PC-9 (cell line): ENCODE measurements at regions of chr17 and their contacts with region 1.

Region 1: DNA sequence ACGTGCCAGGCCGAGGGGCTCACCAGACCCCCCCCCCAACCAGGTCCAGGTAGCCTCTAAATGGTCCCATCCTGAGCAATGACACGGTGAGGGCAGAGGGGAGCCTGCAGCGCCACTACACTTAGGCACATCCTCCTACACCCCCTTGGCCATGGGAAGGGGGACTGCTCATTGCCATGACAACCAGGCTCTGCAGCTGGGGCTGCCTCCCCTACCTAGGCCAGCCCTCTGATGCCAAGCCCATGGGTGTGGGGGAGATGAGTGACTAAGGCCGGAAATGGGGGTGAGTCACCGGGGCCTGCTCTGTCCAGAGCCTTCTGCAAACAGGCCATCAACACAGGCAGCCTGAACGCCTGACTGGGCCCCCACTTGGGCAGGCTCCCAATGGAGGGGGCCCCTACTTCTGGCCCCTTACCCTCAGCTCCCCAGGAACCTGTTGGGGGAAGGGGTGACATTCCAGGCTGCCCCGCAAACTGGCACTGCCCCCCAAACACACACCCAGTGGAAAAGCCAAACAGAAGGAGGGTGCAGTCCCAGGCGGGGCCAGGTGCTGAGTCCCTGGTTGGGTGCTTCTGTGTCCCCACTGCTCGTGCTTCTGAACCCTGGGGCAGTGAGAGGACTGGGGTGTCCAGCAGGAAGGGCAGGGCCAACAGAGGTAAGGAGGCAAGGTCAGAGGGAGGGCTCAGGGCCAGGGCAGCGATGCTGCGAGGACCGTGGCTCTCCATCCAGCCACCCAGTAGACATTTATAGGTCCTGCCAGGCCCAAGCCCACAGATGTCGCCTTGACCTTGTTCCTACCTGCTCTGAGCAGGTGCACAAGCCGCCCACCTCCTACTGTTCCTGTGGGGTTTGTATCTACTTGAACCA is 8.2 kb downstream of the PLCD3 start:
- DNase-seq: peak; percentile 77 to 85
- H3K4me3 ChIP-seq: no peak overlapping the region
- H3K27ac ChIP-seq: peak overlapping the region; percentile 65
- H3K4me1 ChIP-seq: peaks cover 63% of the 10 kb centered on the region
- H3K27me3 ChIP-seq: no peaks in the 10 kb centered on the region
- CTCF ChIP-seq: no peak

Region 2: DNA sequence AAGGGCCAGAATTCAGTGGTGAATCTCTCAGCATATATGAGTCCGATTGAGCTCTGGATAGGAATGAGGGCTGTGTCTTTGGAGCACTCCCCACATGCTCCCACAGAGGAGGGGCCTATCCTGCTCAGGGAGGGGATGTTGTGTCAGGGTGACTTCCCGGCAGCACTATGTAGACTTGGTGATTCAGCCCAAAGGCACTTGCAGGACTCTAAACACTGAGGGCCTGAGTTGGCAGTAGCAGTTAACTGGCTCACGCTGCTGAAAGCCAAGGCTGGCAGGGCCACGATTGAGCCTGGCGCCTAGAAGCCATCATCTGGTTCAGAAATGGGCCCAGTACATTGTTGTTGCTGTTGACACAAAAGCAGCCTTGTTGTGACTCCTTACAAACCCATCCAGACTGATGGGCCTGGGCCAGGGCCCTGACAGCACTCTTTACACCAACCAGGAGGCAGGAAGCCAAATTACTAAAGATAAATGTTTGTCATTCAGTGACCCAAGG is 31.2 kb before region 1 on chr17:
- CTCF ChIA-PET with region 1: no interaction called
- POLR2A ChIA-PET with region 1: interaction called, 4 read pairs
- intact Hi-C with region 1: loop called (anchors 2 kb)
- DNase-seq: peak; percentile 86 to 88
- H3K4me3 ChIP-seq: no peak overlapping the region
- H3K27ac ChIP-seq: peak overlapping the region; percentile 66
- H3K4me1 ChIP-seq: peaks cover 21% of the 10 kb centered on the region
- H3K27me3 ChIP-seq: no peaks in the 10 kb centered on the region
- CTCF ChIP-seq: no peak

Region 3: DNA sequence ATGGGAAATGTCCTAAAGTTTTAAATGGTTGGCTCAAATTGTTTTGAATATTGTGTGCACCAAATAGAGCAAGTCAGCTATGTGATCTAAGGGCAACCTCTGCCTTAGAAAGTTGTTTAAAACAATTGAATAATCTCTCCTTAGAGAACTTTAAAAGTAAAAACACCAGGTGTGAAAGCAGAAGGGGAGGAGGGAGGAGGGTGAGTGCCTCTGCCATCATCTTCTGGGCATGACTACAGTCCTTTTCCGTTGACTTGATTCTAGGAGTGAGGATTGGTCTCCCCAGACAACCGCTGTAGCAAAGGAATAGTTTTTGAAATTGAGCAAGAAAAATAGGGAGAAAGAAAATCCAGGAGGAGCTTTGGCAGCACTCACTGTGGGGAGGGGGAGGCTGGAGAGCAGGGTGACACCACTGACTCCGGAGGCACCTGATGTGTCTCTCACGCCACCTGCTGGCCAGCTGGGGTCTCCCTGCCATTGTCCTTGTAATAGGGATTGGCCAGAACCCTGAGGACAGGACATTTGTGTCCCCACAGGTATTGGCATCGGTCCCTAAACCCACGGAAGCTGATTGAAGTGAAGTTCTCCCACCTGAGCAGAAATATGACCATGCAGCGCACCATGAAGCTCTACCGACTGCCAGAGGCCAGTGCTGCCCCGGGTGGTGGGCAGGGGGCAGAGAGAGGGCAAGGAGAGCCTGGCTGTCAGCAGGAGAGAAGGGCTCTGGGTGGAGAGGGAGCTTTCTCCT is 25.1 kb before region 1 on chr17:
- CTCF ChIA-PET with region 1: interaction called, 4 read pairs
- POLR2A ChIA-PET with region 1: no interaction called
- intact Hi-C with region 1: loop called (anchors 1 kb)
- DNase-seq: peak; percentile 61 to 81
- H3K4me3 ChIP-seq: no peak overlapping the region
- H3K27ac ChIP-seq: no peak overlapping the region
- H3K4me1 ChIP-seq: peaks cover under 1% of the 10 kb centered on the region; the same call in 1 of the 2 replicates
- H3K27me3 ChIP-seq: no peaks in the 10 kb centered on the region
- CTCF ChIP-seq: peak; percentile 91

Region 4: GRCh38 chr17:45385331-45385997 is 261.3 kb after region 1 on chr17:
- CTCF ChIA-PET with region 1: no interaction called
- POLR2A ChIA-PET with region 1: no interaction called
- intact Hi-C with region 1: no loop called
- DNase-seq: peak; percentile 65 to 85
- H3K4me3 ChIP-seq: no peak overlapping the region
- H3K27ac ChIP-seq: no peak overlapping the region
- H3K4me1 ChIP-seq: peaks cover 22% of the 10 kb centered on the region
- H3K27me3 ChIP-seq: no peaks in the 10 kb centered on the region
- CTCF ChIP-seq: peak; percentile 100